ENCODE measurements at regions of chr1 and their contacts with region 1.

Region 1: GRCh38 chr1:93525431-93525830 is 77.5 kb downstream of the FNBP1L start:
- DNase-seq: no peak
- ATAC-seq: no peak
- H3K4me3 ChIP-seq: no peak overlapping the region
- H3K27ac ChIP-seq: no peak overlapping the region
- H3K4me1 ChIP-seq: no peaks in the 10 kb centered on the region
- H3K27me3 ChIP-seq: no peaks in the 10 kb centered on the region
- CTCF ChIP-seq: no peak
- EP300 ChIP-seq: no peak
- POLR2A ChIP-seq: no peak
- RAD21 ChIP-seq: no peak

Region 2: GRCh38 chr1:93546162-93546863 is 20.9 kb after region 1 on chr1:
- CTCF ChIA-PET with region 1: no interaction called
- POLR2A ChIA-PET with region 1: interaction called, 12 read pairs
- in situ Hi-C with region 1: no loop called
- intact Hi-C with region 1: no loop called
- DNase-seq: no peak
- ATAC-seq: no peak
- H3K4me3 ChIP-seq: no peak overlapping the region
- H3K27ac ChIP-seq: no peak overlapping the region
- H3K4me1 ChIP-seq: no peaks in the 10 kb centered on the region
- H3K27me3 ChIP-seq: no peaks in the 10 kb centered on the region
- CTCF ChIP-seq: no peak
- EP300 ChIP-seq: no peak
- POLR2A ChIP-seq: no peak
- RAD21 ChIP-seq: no peak

Region 3: DNA sequence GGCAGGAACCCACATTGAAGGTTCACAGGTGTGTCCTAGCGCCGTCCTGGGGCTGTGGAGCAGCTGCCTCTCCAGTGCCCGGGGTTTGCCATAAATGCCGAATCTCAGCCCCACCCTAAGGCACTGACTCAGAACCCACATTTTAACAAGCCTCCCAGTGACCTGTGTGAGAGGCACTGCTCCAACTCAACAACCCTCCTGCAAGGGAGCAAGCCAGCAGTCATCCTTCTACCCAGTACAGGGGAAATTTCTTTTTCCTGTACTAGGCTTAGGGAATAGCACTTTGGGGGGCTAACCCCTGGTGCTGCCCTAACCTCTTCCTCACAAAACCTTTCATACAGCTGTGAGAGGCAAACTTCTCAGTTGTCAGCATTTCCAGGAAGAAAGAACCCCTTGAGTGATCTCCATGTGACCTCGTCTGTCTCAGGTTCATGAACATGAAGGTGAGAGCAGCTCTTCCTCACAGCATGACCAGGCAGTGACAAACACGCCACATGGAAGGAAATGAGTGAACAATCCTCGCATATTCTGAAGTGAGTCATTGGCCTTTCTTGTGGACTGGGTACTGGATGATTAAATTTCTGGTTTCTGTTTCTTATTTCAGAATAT is 167.7 kb after region 1 on chr1:
- CTCF ChIA-PET with region 1: no interaction called
- POLR2A ChIA-PET with region 1: no interaction called
- in situ Hi-C with region 1: no loop called
- intact Hi-C with region 1: no loop called
- DNase-seq: no peak
- ATAC-seq: no peak
- H3K4me3 ChIP-seq: no peak overlapping the region
- H3K27ac ChIP-seq: no peak overlapping the region
- H3K4me1 ChIP-seq: no peaks in the 10 kb centered on the region
- H3K27me3 ChIP-seq: peaks cover 5 to 48% of the 10 kb centered on the region in 2 experiments
- CTCF ChIP-seq: no peak
- EP300 ChIP-seq: no peak
- POLR2A ChIP-seq: no peak
- RAD21 ChIP-seq: no peak

Region 4: DNA sequence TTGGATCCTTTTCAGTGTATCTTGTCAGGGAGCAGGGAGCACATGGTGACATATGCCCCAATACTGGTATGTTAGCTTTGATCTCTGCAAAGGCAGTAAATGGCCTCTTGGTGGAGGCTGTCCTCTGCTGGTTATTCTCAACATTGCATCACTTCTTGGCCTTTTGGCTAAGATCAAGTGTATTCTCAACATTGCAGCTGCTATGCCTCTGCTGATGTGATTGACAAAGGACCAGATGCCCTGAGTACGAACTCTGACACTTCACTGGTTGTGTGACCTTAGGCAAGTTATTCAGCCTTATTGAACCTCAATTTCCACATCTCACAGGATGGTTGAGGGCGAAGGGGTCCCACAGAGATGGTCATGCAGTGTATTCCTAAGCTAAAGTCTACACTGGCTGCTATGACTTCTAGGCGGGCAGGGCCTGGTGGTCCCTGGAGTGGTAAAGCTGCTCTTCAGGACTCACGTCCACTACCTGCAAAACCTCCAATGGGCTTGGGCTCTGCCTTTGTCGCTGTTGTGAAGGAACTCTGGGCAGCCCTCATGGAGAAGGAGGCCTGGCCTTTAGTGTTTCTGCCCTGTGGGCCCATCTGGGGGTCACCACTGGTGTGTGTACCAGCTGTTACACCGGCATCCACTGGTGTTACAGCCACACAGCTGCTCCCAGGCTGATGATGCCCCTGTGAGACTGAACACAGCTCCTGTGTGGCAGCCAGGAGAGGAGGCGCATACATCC is 288.8 kb after region 1 on chr1:
- CTCF ChIA-PET with region 1: no interaction called
- POLR2A ChIA-PET with region 1: no interaction called
- in situ Hi-C with region 1: no loop called
- intact Hi-C with region 1: no loop called
- DNase-seq: peak; percentile 42 to 75 (median 50)
- ATAC-seq: peak; percentile 89
- H3K4me3 ChIP-seq: no peak overlapping the region
- H3K27ac ChIP-seq: no peak overlapping the region
- H3K4me1 ChIP-seq: peaks cover 0 to 15% of the 10 kb centered on the region in 2 experiments; a peak in 3 of 5 replicates
- H3K27me3 ChIP-seq: peaks cover 12 to 15% of the 10 kb centered on the region in 2 experiments; a peak in 4 of 5 replicates
- CTCF ChIP-seq: peak; percentile 88 to 96 (median 91)
- EP300 ChIP-seq: no peak
- POLR2A ChIP-seq: no peak
- RAD21 ChIP-seq: peak; percentile 99 to 100

Measured in K562 (cell line).